B cell (primary cell): ENCODE measurements at regions of chr5 and their contacts with region 1.

Region 1: GRCh38 chr5:126693806-126694802 is 82.8 kb upstream of the LMNB1 start:
- DNase-seq: no peak
- ATAC-seq: no peak
- H3K4me3 ChIP-seq: no peak overlapping the region
- H3K4me3 Mint-ChIP-seq: no peak overlapping the region
- H3K27ac ChIP-seq: no peak overlapping the region
- H3K27ac Mint-ChIP-seq: no peak overlapping the region
- H3K4me1 ChIP-seq: no peaks in the 10 kb centered on the region
- H3K4me1 Mint-ChIP-seq: no peaks in the 10 kb centered on the region
- H3K27me3 ChIP-seq: no peaks in the 10 kb centered on the region
- H3K27me3 Mint-ChIP-seq: no peaks in the 10 kb centered on the region
- CTCF ChIP-seq: no peak

Region 2: GRCh38 chr5:126745259-126745992 is 51.3 kb after region 1 on chr5:
- CTCF ChIA-PET with region 1: no interaction called
- POLR2A ChIA-PET with region 1: no interaction called
- intact Hi-C with region 1: loop called (anchors 10 kb)
- DNase-seq: no peak
- ATAC-seq: no peak
- H3K4me3 ChIP-seq: no peak overlapping the region
- H3K4me3 Mint-ChIP-seq: no peak overlapping the region
- H3K27ac ChIP-seq: no peak overlapping the region
- H3K27ac Mint-ChIP-seq: no peak overlapping the region
- H3K4me1 ChIP-seq: peaks cover 11 to 14% of the 10 kb centered on the region in 2 donors
- H3K4me1 Mint-ChIP-seq: peaks cover 15% of the 10 kb centered on the region
- H3K27me3 ChIP-seq: no peaks in the 10 kb centered on the region
- H3K27me3 Mint-ChIP-seq: no peaks in the 10 kb centered on the region
- CTCF ChIP-seq: no peak